MCF 10A (cell line): ENCODE measurements at regions of chr5 and their contacts with region 1.

Region 1: DNA sequence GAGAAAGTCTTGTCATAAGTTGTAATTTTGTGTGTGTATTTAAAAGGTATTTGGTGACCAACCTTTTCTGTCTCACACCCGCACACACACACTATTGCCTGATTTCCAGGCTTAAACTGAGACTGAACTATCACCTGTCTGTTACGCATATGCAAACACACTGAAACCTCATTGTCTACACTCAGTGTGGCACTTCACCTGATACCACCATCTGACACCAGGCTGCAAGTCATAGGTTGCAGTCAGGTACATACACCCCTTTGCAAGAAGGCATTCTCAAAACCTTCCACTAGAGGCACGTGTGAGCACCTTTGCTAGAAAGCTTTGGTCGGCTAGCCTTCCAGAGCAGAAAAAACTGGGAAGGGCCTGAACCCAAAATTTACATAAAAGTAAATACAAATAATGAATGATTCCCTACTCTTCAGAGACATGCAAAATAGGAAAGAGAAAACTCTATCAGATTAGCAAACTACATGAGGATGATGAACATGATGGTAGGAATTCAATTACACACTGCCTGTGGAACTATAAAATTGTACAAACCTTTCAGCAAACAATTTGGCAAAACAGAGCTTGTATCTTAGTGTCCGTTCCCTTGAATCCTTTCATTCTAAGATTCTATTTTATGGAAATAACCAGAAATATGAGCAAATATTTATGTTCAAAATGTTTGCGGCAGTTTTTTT is 5.9 kb upstream of the FOXD1 start:
- DNase-seq: peak; percentile 85
- H3K4me3 Mint-ChIP-seq: no peak overlapping the region
- H3K27ac Mint-ChIP-seq: no peak overlapping the region
- H3K4me1 Mint-ChIP-seq: peaks cover 5% of the 10 kb centered on the region
- H3K27me3 Mint-ChIP-seq: no peaks in the 10 kb centered on the region
- CTCF ChIP-seq: peak; percentile 70

Region 2: DNA sequence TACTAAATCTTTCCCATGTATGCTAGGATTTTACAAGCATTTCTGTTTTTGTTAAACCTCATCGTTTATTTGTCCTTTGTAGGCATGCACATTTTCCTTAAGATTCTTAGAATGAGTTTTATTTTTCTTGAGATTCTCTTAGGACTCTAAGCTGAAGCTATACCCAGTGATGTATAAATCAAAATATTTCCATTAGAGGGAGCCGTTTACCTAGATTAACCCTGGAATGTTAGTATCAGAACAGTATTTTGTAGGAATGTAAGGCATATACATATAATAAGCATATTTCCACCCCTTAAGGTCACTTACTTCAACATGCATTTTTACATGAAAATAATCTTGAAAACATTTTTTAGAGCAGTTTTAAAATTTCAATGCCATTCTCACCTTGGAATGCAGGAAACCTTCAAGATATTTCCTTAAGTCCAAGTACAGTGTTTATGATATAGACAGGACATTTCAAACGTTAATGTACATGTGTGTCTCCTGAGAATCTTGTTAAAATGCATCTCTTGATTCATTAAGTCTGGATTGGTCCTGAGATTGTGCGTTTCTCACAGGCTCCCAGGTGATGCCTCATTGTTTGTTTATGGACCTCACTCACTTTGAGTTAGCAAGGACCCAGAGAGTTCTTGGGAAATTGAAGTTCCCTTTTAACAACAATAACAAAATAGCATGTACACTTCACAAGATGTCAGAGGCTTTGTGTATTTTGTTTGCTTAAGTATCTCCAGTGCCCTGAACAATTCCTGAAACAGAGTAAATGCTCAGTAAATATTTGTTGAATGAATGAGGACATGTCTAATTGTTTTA is 533.6 kb before region 1 on chr5:
- CTCF ChIA-PET with region 1: interaction called, 4 read pairs
- POLR2A ChIA-PET with region 1: no interaction called
- intact Hi-C with region 1: loop called (anchors 5 kb)
- DNase-seq: peak; percentile 45
- H3K4me3 Mint-ChIP-seq: no peak overlapping the region
- H3K27ac Mint-ChIP-seq: no peak overlapping the region
- H3K4me1 Mint-ChIP-seq: no peaks in the 10 kb centered on the region
- H3K27me3 Mint-ChIP-seq: no peaks in the 10 kb centered on the region
- CTCF ChIP-seq: peak; percentile 38

Region 3: GRCh38 chr5:73189871-73190376 is 264.6 kb before region 1 on chr5:
- CTCF ChIA-PET with region 1: no interaction called
- POLR2A ChIA-PET with region 1: no interaction called
- intact Hi-C with region 1: no loop called
- DNase-seq: peak; percentile 18
- H3K4me3 Mint-ChIP-seq: no peak overlapping the region
- H3K27ac Mint-ChIP-seq: no peak overlapping the region
- H3K4me1 Mint-ChIP-seq: no peaks in the 10 kb centered on the region
- H3K27me3 Mint-ChIP-seq: no peaks in the 10 kb centered on the region
- CTCF ChIP-seq: no peak

Region 4: DNA sequence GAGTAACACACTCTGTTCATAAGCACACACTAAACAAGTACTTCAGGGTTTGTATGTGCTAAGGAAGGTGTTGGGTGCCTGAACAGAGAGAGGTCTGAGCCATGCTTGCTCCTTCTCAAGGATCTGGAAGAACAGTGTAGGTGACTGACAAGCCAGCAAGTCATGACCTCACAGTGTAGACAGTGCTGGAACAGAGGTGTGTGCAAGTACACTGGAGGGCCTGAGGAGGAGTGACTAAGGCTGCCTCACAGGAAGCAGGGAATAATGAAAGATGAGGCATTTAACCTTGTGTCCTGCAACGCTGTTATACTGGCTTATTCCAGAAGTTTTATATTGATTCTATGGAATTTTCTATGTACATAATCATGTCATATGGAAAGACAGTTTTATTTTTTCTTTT is 197.6 kb before region 1 on chr5:
- CTCF ChIA-PET with region 1: no interaction called
- POLR2A ChIA-PET with region 1: no interaction called
- intact Hi-C with region 1: no loop called
- DNase-seq: peak; percentile 45
- H3K4me3 Mint-ChIP-seq: no peak overlapping the region
- H3K27ac Mint-ChIP-seq: no peak overlapping the region
- H3K4me1 Mint-ChIP-seq: no peaks in the 10 kb centered on the region
- H3K27me3 Mint-ChIP-seq: no peaks in the 10 kb centered on the region
- CTCF ChIP-seq: no peak

Region 5: DNA sequence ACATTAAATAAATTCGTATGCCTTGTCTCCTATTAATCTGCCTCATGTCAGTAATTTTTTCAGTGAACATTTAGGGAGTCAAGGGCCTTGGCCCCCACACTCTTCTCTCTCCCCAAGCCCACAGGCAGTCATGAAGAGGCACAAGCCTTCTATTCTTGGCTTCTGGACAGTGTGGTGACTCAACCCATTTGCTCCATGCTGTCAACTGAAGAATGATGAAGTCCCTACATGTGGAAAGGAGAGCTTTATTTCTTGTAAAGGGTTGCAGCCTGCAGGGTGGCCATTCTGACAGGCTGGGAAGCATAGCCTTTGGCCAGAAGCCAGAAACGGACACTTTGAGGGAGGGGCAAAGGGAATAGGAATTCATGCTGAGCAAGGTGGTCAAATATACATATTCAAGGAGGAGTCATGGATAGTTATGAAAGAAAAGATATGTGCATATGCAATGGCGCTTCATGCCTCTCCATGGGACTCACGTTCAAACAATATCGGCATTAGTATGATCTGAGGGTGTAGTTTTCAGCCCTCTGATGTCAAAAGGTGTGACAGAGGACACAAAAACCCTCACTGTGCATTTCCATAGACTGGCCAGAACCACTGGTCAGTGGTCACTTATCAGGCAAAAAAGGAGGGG is 79.6 kb after region 1 on chr5:
- CTCF ChIA-PET with region 1: interaction called, 4 read pairs
- POLR2A ChIA-PET with region 1: no interaction called
- intact Hi-C with region 1: loop called (anchors 10 kb)
- DNase-seq: no peak
- H3K4me3 Mint-ChIP-seq: no peak overlapping the region
- H3K27ac Mint-ChIP-seq: no peak overlapping the region
- H3K4me1 Mint-ChIP-seq: no peaks in the 10 kb centered on the region
- H3K27me3 Mint-ChIP-seq: no peaks in the 10 kb centered on the region
- CTCF ChIP-seq: no peak